ENCODE measurements at regions of chr1 and their contacts with region 1.

Region 1: DNA sequence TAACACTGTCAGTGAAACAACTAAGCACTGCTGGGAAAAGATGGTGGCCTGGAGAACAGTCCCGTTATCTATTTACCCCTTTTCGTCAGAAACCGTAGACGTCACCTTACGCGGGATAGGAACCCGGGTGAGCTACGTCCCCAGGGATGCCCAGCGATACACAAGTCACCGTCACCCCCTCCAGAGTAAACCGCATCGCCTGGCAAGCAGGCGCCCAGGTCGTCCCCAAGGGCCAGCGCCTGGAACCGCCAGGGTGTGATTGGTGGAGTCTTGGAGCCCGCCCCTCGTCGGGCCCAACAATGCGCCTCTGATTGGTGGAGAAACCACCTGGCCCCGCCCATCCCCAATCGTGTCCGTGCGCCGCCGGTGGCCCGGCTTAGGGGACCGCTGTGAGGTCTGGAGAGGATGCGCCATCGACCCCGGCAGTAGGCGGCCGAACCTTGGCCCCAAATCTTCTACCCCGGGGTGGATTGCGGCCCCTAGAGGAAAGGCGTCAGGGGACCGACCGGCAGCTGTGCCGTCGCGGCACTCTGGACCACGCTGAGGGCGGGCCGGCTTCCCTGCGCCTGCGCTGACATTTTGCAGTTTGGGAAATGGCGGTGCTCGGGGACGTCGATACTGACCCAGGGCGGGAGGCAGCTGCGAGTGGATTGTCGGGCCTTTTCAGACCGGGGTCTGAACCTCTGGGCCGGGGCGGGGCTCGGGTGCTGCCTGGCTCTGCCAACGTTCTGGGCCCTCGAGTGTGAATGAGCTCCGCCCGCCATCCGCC is 34.4 kb downstream of the SLC2A1 start:
- DNase-seq: peak; percentile 78 to 91
- ATAC-seq: peak; percentile 87 to 93
- H3K4me3 ChIP-seq: peak overlapping the region; percentile 54
- H3K27ac ChIP-seq: peak overlapping the region; percentile 93 to 99
- H3K4me1 ChIP-seq: peaks cover 40% of the 10 kb centered on the region
- CTCF ChIP-seq: no peak
- EP300 ChIP-seq: no peak
- POLR2A ChIP-seq: peak; percentile 56
- RAD21 ChIP-seq: peak in 1 of 2 experiments; percentile 24; a peak in 1 of 5 replicates

Region 2: GRCh38 chr1:42777852-42778251 is 146.4 kb before region 1 on chr1:
- CTCF ChIA-PET with region 1: interaction called, 12 read pairs
- POLR2A ChIA-PET with region 1: no interaction called
- DNase-seq: peak; percentile 43 to 60
- ATAC-seq: peak; percentile 81 to 83; a peak in 5 of 6 replicates
- H3K4me3 ChIP-seq: no peak overlapping the region
- H3K27ac ChIP-seq: no peak overlapping the region
- H3K4me1 ChIP-seq: no peaks in the 10 kb centered on the region
- CTCF ChIP-seq: peak; percentile 61
- EP300 ChIP-seq: no peak
- POLR2A ChIP-seq: no peak
- RAD21 ChIP-seq: peak; percentile 74 to 82

Region 3: GRCh38 chr1:42913426-42914091 is 10.7 kb before region 1 on chr1:
- CTCF ChIA-PET with region 1: interaction called, 44 read pairs
- POLR2A ChIA-PET with region 1: no interaction called
- DNase-seq: peak; percentile 48 to 80
- ATAC-seq: peak; percentile 56 to 84; a peak in 5 of 6 replicates
- H3K4me3 ChIP-seq: no peak overlapping the region
- H3K27ac ChIP-seq: no peak overlapping the region
- H3K4me1 ChIP-seq: no peaks in the 10 kb centered on the region
- CTCF ChIP-seq: peak; percentile 62
- EP300 ChIP-seq: no peak
- POLR2A ChIP-seq: no peak
- RAD21 ChIP-seq: peak; percentile 85 to 91

Region 4: DNA sequence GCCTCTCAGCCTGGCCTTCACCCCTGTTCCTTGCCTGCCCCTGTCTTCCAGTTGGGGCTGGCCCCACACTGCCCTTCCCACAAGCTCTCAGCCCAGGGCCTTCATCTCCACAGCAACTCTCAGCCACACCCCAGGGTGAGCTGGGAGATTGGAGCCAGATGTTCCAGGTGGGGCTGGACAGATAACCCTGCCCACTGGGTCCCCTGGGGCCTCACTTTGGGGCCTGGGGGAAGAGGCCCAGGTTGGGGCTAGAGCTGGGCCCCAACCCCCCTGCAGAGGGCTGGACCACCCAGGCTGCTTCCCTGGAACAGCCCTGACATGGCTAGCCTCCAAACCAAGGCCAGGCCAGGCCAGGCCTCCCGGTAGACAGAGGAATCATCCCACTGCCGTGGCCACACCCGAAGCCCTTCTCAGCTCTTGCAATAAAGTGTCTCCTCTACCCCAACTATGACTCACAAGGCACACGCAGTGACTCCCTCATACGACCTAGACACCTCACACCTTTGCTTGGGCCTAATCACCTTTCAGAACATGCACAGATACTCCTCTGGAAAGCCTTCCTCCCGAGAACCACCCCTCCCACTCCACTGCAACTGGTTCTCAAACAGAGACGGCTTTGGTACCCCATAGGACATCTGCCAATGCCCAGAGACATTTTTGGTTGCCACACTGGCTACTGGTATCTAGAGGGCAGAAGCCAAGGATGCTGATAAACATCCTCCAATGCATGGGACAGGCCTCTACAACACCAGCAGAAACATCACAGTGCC is 12.2 kb after region 1 on chr1:
- CTCF ChIA-PET with region 1: interaction called, 40 read pairs
- POLR2A ChIA-PET with region 1: interaction called, 7 read pairs
- DNase-seq: peak in 1 of 2 experiments; percentile 92
- ATAC-seq: peak; percentile 64 to 69
- H3K4me3 ChIP-seq: 0 out of 3 replicates have a peak overlapping the region, but pooled peaks have one; percentile 13
- H3K27ac ChIP-seq: peak overlapping the region; percentile 91 to 99
- H3K4me1 ChIP-seq: peaks cover 100% of the 10 kb centered on the region
- CTCF ChIP-seq: no peak
- EP300 ChIP-seq: peak; percentile 86 to 87; a peak in 4 of 5 replicates
- POLR2A ChIP-seq: no peak
- RAD21 ChIP-seq: peak in 1 of 2 experiments; percentile 51; a peak in 2 of 5 replicates

Region 5: GRCh38 chr1:42941640-42942330 is 17.5 kb after region 1 on chr1:
- CTCF ChIA-PET with region 1: interaction called, 40 read pairs
- POLR2A ChIA-PET with region 1: interaction called, 7 read pairs
- DNase-seq: peak in 1 of 2 experiments; percentile 91
- ATAC-seq: peak; percentile 48 to 49
- H3K4me3 ChIP-seq: 0 out of 3 replicates have a peak overlapping the region, but pooled peaks have one; percentile 16
- H3K27ac ChIP-seq: peak overlapping the region; percentile 91 to 99
- H3K4me1 ChIP-seq: peaks cover 100% of the 10 kb centered on the region
- CTCF ChIP-seq: no peak
- EP300 ChIP-seq: no peak
- POLR2A ChIP-seq: no peak
- RAD21 ChIP-seq: peak in 1 of 2 experiments; percentile 7; a peak in 1 of 5 replicates

Region 6: DNA sequence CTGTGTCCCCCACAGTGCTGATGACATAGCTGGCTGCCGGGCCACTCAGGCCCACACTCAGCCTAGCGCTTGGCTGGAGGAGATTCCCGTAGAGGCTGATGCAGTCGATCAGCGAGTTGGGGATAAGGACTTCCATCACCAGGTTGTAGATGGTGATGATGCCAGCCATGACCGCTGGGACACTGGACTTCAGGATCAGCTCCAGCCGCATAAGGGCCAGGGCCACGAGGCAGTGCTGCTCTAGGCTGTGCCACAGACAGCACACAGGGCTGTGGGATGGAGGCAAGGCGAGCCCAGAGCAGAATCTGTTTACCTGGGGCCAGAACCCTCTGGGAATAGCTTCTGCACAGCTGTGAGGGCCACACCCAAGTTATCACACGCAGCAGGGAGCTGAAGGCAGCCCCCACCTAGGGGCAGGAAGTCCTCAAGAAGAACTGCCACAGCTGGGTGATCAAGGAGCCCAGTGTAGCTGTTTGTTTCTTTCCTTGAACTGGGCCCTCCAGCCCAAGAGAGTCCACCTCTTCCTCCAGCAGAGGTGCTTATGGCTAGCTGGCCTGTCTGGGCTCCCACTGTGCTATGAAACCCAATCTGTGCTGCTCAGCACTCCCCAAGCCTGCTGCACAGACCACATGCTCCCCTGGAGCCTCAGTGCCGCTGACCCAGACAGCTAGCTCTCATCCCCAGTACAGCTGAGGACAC is 28.2 kb after region 1 on chr1:
- CTCF ChIA-PET with region 1: interaction called, 10 read pairs
- POLR2A ChIA-PET with region 1: interaction called, 4 read pairs
- DNase-seq: peak in 1 of 2 experiments; percentile 2
- ATAC-seq: peak; percentile 15 to 16; a peak in 4 of 6 replicates
- H3K4me3 ChIP-seq: no peak overlapping the region
- H3K27ac ChIP-seq: peak overlapping the region; percentile 48 to 75; a peak in 5 of 6 replicates
- H3K4me1 ChIP-seq: peaks cover 85% of the 10 kb centered on the region
- CTCF ChIP-seq: no peak
- EP300 ChIP-seq: no peak
- POLR2A ChIP-seq: no peak
- RAD21 ChIP-seq: no peak

Region 7: DNA sequence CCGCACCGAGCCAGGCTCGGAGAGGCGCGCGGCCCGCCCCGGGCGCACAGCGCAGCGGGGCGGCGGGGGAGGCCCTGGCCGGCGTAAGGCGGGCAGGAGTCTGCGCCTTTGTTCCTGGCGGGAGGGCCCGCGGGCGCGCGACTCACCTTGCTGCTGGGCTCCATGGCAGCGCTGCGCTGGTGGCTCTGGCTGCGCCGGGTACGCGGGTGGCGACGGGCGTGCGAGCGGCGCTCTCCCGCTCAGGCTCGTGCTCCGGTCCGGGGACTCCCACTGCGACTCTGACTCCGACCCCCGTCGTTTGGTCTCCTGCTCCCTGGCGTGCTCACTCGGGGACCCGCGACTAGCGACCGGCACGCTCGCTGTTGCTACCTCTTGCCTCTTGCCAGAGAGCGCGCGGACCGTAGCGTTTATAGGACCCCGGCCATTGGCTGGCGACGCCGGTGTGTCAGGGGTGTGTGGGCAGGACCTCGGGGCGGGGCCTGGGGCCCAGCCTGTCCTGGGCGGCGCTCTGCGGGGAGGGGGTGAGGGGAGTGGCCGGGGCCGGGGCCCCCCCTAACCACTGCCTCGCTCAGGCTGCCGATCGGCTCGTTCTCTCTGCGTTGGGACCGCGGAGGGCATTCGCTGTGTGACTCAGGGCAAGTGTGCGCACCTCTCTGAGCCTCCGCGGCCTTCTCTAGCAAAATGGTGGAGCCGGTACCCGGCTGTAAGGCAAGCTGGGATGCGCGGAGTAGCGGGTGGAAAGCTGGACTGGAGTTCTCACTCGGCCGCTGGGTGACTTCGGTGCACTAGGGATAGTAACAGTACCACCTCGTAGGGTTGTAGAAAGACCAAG is 34.4 kb after region 1 on chr1 and contains the start of gene SLC2A1:
- CTCF ChIA-PET with region 1: interaction called, 11 read pairs
- POLR2A ChIA-PET with region 1: interaction called, 4 read pairs
- DNase-seq: peak; percentile 76 to 93
- ATAC-seq: peak; percentile 80 to 88
- H3K4me3 ChIP-seq: peak within 1 kb of the TSS; percentile 86
- H3K27ac ChIP-seq: peak within 1 kb of the TSS; percentile 87 to 88
- H3K4me1 ChIP-seq: peaks cover 69% of the 10 kb centered on the region
- CTCF ChIP-seq: no peak
- EP300 ChIP-seq: no peak
- POLR2A ChIP-seq: peak; percentile 91
- RAD21 ChIP-seq: no peak; a peak in 1 of 5 replicates
- polyA plus RNA-seq, gene SLC2A1: 106 and 107 TPM in 2 replicates

Region 8: GRCh38 chr1:43038232-43038921 is 114.1 kb after region 1 on chr1:
- CTCF ChIA-PET with region 1: no interaction called
- POLR2A ChIA-PET with region 1: no interaction called
- DNase-seq: no peak
- ATAC-seq: no peak
- H3K4me3 ChIP-seq: no peak overlapping the region
- H3K27ac ChIP-seq: no peak overlapping the region
- H3K4me1 ChIP-seq: peaks cover 14% of the 10 kb centered on the region; the same call in 2 of the 3 replicates
- CTCF ChIP-seq: no peak
- EP300 ChIP-seq: no peak
- POLR2A ChIP-seq: no peak
- RAD21 ChIP-seq: no peak